Ascending aorta (tissue), 2 donors: ENCODE measurements at regions of chr2 and their contacts with region 1.

Region 1: GRCh38 chr2:32168513-32168912 is 2.8 kb downstream of the SLC30A6 start:
- DNase-seq: no peak
- H3K4me3 ChIP-seq: no peak overlapping the region
- H3K27ac ChIP-seq: no peak overlapping the region
- H3K4me1 ChIP-seq: peaks cover 0 to 5% of the 10 kb centered on the region in 2 donors
- H3K27me3 ChIP-seq: no peaks in the 10 kb centered on the region
- CTCF ChIP-seq: no peak

Region 2: DNA sequence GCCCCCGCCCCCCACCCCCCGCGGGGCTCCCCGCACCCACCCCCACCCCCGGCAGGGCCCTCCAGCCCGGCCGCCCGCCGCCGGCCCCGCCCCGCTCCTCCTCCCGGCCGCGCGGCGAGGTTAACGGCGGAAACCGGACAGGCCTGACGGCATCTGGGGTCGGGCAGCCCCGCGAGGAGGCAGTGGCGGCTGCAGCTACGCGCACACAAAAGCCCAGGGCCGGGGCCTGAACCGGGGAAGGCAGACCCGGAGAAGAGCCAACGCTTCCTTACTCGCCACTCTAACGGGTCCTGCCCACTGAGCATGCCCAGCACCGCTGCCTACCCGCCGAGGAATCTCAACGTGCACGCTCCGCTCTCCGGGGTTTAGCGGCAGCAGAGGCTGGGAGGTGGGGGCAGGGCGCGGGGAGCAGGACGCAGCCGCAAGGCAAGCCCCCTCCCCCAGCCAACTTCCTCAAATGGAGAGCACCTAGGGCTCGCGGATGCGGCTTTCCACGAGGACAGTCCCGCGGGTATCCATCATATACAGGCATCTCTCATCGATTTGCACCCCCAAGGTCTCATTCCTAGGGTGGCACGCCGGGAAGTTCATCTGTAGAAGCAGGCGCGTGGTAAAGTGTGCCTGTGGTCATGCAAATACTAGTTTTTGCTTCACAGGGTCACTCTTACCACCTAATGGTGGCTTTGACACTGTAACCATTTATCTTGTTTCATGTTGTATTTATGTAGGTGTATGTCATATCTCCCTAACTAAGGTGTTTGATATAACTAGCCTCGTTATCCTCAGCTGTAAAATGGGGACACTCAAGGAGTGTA is 157.6 kb before region 1 on chr2 and contains the start of gene MEMO1:
- intact Hi-C with region 1: loop called (anchors 2 kb)
- DNase-seq: peak; percentile 76 to 96
- H3K4me3 ChIP-seq: peak within 1 kb of the TSS; percentile 70 to 89
- H3K27ac ChIP-seq: peak within 1 kb of the TSS; percentile 86 to 98
- H3K4me1 ChIP-seq: peaks cover 3 to 23% of the 10 kb centered on the region in 2 donors
- H3K27me3 ChIP-seq: no peaks in the 10 kb centered on the region
- CTCF ChIP-seq: peak in 1 of 3 experiments; percentile 9
- total RNA-seq, gene MEMO1: 4.6 TPM

Region 3: DNA sequence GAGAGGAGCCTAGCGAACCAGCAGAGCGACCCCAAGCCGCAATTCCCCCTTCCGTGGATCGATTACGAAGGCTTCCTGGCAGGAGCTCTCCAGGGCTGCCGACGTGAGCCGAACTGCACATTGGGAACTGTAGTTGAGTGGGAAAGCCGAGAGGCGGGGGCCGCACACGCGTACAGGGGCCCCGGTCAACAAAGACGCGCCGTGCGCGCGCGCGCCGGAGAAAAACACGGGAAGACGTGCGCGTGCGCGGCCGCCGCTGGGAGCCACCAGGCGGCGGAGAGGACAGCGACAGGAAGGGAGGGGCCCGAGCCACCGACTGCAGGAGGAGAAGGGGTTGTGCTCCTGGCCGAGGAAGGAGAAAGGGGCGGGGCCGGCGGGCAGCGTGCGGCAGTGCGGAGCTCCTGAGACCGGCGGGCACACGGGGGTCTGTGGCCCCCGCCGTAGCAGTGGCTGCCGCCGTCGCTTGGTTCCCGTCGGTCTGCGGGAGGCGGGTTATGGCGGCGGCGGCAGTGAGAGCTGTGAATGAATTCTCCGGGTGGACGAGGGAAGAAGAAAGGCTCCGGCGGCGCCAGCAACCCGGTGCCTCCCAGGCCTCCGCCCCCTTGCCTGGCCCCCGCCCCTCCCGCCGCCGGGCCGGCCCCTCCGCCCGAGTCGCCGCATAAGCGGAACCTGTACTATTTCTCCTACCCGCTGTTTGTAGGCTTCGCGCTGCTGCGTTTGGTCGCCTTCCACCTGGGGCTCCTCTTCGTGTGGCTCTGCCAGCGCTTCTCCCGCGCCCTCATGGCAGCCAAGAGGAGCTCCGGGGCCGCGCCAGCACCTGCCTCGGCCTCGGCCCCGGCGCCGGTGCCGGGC is 105.0 kb before region 1 on chr2 and contains the start of gene SPAST:
- intact Hi-C with region 1: loop called (anchors 1 kb)
- DNase-seq: peak; percentile 89 to 99
- H3K4me3 ChIP-seq: peak within 1 kb of the TSS; percentile 78 to 91
- H3K27ac ChIP-seq: peak within 1 kb of the TSS; percentile 87 to 92
- H3K4me1 ChIP-seq: peaks cover 0 to 5% of the 10 kb centered on the region in 2 donors
- H3K27me3 ChIP-seq: no peaks in the 10 kb centered on the region
- CTCF ChIP-seq: peak; percentile 57 to 77 (median 63)
- total RNA-seq, gene SPAST: 12.1 TPM

Region 4: DNA sequence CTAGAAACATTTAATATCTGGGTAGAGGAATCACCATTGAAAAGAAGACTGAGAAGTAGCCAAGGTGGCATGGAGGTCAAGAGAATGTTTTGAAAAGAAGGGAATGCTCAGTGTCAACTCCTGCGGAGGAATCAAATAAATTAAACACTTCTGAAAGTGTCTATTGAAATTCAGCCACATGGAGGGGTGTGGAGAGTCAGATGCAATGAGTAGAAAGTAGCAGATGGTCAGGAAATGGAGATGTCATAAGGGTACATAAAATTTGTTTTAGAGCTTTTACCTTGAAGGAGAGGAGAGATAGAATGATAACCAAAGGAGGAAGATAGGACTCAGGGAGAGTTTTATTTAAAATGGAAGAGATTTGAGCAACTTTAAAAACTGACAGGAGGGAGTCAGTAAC is 61.1 kb after region 1 on chr2:
- intact Hi-C with region 1: no loop called
- DNase-seq: no peak
- H3K4me3 ChIP-seq: no peak overlapping the region
- H3K27ac ChIP-seq: no peak overlapping the region
- H3K4me1 ChIP-seq: no peaks in the 10 kb centered on the region
- H3K27me3 ChIP-seq: no peaks in the 10 kb centered on the region
- CTCF ChIP-seq: no peak

Region 5: GRCh38 chr2:32277674-32278482 is 109.4 kb after region 1 on chr2 and contains the start of gene YIPF4:
- intact Hi-C with region 1: loop called (anchors 5 kb)
- DNase-seq: peak; percentile 73 to 94
- H3K4me3 ChIP-seq: peak within 1 kb of the TSS; percentile 89 to 99
- H3K27ac ChIP-seq: peak within 1 kb of the TSS; percentile 81 to 85
- H3K4me1 ChIP-seq: peaks cover 3 to 4% of the 10 kb centered on the region in 2 donors
- H3K27me3 ChIP-seq: no peaks in the 10 kb centered on the region
- CTCF ChIP-seq: no peak
- total RNA-seq, gene YIPF4: 9.2 TPM

Region 6: GRCh38 chr2:33599175-33599942 is 1430.8 kb after region 1 on chr2 and contains the start of gene FAM98A:
- intact Hi-C with region 1: loop called (anchors 5 kb)
- DNase-seq: peak; percentile 93 to 99
- H3K4me3 ChIP-seq: peak within 1 kb of the TSS; percentile 67 to 100
- H3K27ac ChIP-seq: peak within 1 kb of the TSS; percentile 80 to 90
- H3K4me1 ChIP-seq: peaks cover 3 to 10% of the 10 kb centered on the region in 2 donors
- H3K27me3 ChIP-seq: no peaks in the 10 kb centered on the region
- CTCF ChIP-seq: no peak
- total RNA-seq, gene FAM98A: 34.8 TPM